ENCODE measurements at regions of chr4 and their contacts with region 1.

Region 1: DNA sequence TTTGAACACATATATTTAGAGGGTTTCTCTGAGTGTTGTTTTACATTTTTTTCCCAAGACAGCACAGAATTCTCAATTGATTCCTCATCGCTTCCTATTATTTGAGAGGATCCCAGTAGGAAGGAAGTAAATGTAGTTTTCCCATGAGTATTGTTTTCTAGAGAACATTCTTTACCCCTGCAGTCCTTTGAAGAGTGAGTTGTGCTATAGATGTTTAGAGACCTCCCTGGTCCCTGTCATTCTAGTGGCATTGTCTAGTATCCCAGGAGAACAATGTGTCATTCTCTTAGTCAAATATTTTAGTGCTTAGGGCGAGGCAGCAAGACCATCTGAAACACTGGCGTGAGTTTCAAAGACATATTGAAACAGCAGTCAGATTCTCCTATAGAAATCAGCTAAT is 32.5 kb downstream of the SORBS2 start:
- DNase-seq: no peak
- H3K4me3 ChIP-seq: no peak overlapping the region
- CTCF ChIP-seq: no peak
- POLR2A ChIP-seq: no peak

Region 2: DNA sequence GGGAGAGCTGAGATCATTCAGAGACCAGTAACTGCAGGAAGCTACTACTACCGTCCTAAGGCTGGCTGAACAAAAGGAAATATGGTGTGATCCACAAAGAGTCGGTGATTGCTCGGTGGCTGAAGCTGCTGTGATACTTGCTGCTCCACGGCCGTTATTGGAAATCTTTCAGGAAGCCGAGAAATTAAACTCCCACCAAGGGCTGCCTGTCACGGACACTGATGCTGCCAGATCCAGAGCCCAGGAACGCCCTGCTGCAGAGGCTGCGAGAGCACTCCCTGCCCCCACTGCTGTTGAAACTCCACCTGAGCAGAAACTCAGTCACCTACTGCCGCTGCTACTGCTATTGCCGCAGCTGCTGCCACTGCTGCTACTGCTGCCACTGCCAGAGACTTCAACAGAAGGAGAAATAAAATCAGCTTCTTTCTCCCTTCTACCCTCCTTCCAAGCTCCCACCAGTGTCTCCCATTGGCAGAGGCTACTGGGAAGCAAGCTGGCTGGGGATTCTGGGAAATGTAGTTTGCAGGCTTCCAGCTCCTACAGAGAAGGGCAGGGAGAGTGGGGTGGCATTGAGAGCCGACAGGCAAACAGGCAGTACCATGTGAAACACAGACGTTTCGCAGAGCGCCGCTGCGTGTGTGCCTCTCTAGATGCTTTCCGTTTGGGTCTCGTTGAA is 1435.9 kb before region 1 on chr4:
- intact Hi-C with region 1: no loop called
- DNase-seq: peak; percentile 62 to 92
- H3K4me3 ChIP-seq: peak overlapping the region; percentile 33
- CTCF ChIP-seq: no peak
- POLR2A ChIP-seq: no peak

Region 3: DNA sequence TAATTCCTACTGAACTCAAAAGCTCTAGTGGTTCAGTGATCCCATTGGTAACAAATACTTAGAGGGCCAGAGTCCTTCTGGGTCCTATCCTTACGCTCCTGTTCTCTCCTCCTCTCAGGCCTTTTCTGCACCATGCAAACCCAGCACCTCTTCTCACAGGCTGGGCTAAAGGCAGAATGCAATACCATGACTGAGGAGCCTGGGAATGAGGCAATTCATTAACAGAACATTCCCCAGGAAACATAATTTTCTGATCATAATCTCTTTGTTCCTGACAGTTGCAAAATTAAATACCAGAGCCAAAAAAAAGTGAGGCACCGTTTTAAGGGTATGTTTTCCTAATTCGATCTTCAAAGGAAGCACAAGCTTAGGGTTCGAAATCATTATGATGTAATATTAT is 23.5 kb after region 1 on chr4:
- intact Hi-C with region 1: loop called (anchors 1 kb)
- DNase-seq: no peak
- H3K4me3 ChIP-seq: no peak overlapping the region
- CTCF ChIP-seq: no peak
- POLR2A ChIP-seq: no peak

Measured in lower leg skin (tissue), 4 donors.